ENCODE measurements at regions of chr3 and their contacts with region 1.

Region 1: GRCh38 chr3:49906004-49906743 is 2.5 kb upstream of the MST1R start:
- DNase-seq: peak; percentile 73 to 78
- H3K4me3 ChIP-seq: peak overlapping the region; percentile 43; the same call in 1 of the 2 replicates
- H3K27ac ChIP-seq: peak overlapping the region; percentile 50
- H3K4me1 ChIP-seq: peaks cover 38% of the 10 kb centered on the region
- H3K27me3 ChIP-seq: no peaks in the 10 kb centered on the region
- CTCF ChIP-seq: peak; percentile 70

Region 2: DNA sequence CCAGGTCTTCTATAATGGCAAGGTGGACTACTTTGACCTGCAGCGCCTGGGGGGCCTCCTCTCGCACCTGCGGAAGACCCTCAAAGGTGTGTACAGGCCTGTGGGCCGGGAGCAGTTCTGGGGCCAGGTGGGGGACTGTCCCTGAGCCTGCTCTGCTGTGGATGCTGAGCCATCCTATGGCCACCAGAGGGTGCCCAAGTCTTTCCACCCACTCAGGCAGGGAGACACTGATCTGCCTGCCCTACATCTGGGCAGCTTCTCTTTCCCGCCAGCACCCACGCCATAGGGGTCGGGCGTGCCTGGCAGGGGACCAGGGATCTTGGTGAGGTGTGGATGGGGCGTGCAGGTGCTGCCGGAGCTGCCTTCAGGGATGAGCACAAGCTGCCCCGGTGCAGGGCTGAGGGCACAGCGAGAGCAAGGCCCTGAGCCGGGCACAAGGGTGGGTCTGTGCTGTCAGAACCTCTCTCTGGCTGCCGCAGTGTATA is 202.7 kb before region 1 on chr3:
- CTCF ChIA-PET with region 1: no interaction called
- POLR2A ChIA-PET with region 1: no interaction called
- intact Hi-C with region 1: loop called (anchors 5 kb)
- DNase-seq: peak in 1 of 2 experiments; percentile 77
- H3K4me3 ChIP-seq: no peak overlapping the region
- H3K27ac ChIP-seq: no peak overlapping the region
- H3K4me1 ChIP-seq: no peaks in the 10 kb centered on the region
- H3K27me3 ChIP-seq: no peaks in the 10 kb centered on the region
- CTCF ChIP-seq: peak; percentile 75

Region 3: DNA sequence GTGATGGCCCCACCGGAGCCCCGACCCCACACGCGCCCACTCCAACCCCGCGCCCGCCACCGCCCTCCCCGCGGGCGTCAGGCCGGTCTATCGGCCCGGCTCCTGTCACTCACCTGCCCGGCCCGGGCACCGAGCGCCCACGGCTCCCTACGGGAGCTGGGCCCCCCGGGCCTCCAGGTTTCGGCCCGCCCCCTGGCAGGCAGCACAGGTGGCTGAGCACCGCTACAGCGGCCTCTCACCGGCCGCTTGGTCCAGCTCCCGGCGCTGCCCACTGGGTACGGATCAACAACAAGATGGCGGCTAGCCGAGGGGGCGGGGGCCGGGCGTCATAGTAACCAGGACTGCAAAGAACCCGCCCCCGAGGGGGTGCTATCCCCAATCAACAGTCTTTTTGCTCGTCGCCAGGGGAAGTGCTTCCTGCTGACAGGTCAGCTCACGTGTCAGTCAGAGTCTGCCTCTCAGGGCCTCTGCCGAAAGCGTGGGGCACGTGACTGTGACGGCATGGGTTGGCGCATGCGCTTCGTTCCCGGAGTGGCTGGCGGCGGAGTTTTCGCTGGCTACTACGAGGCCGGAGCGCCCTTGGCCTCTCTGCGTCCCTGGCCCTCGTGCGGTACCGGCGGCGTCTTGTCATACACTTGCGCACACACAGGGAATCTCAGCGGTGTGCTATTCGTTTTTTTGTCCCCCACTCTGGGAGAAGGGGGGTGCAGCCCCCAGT is 119.8 kb before region 1 on chr3 and contains the start of gene IP6K1:
- CTCF ChIA-PET with region 1: no interaction called
- POLR2A ChIA-PET with region 1: no interaction called
- intact Hi-C with region 1: loop called (anchors 5 kb)
- DNase-seq: peak; percentile 99
- H3K4me3 ChIP-seq: peak within 1 kb of the TSS; percentile 98
- H3K27ac ChIP-seq: peak within 1 kb of the TSS; percentile 63
- H3K4me1 ChIP-seq: peaks cover 13% of the 10 kb centered on the region; the same call in 1 of the 2 replicates
- H3K27me3 ChIP-seq: no peaks in the 10 kb centered on the region
- CTCF ChIP-seq: no peak
- total RNA-seq, gene IP6K1: 32.9 and 37.0 TPM in 2 replicates

Region 4: GRCh38 chr3:49839193-49839809 is 66.9 kb before region 1 on chr3:
- CTCF ChIA-PET with region 1: interaction called, 4 read pairs
- POLR2A ChIA-PET with region 1: no interaction called
- intact Hi-C with region 1: loop called (anchors 1 kb)
- DNase-seq: peak in 1 of 2 experiments; percentile 59
- H3K4me3 ChIP-seq: no peak overlapping the region
- H3K27ac ChIP-seq: no peak overlapping the region
- H3K4me1 ChIP-seq: no peaks in the 10 kb centered on the region
- H3K27me3 ChIP-seq: no peaks in the 10 kb centered on the region
- CTCF ChIP-seq: peak; percentile 80

Region 5: DNA sequence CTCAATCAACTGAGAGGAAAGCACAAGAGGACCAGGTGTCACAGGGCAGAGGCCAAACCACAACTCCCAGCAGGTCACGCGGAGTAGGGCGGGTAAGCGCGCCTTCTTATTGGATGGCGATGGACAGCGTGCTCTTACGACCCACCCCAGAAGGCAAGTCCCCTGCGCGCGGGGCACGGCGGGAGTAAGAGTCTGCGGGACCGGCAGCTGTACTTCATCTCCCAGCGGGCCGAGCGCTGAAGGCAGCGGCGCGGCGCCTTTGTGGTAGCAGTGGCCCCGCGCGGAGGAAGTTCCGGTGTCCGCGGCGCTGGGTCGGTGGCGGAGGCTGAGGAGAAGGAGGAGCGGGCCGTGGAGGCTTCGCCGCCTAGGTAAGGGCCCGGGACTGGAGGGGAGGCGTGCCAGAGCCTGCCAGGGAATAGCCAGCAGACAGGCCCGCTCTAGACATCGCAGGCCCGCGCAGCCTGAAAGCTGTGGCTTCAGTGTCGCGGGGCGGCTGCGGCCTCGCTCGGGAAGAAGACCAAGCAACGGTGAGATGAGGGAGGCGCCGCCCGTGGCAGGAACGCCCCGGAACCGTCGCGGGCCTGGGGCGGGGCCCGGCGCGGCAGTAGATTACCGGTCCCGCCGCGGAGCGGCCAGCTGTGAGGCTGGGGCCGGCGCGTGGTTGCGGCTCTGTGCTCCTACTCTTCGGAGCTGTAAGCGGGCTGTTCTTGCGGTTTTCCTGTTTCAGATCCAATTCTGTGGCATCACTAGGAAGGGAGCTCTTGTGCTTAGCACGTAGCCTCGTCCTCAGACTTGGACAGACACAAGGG is 33.9 kb after region 1 on chr3 and contains the start of gene RBM6:
- CTCF ChIA-PET with region 1: interaction called, 7 read pairs
- POLR2A ChIA-PET with region 1: no interaction called
- intact Hi-C with region 1: loop called (anchors 1 kb)
- DNase-seq: peak; percentile 93 to 95
- H3K4me3 ChIP-seq: peak within 1 kb of the TSS; percentile 99
- H3K27ac ChIP-seq: peak within 1 kb of the TSS; percentile 72
- H3K4me1 ChIP-seq: peaks cover 8% of the 10 kb centered on the region; the same call in 1 of the 2 replicates
- H3K27me3 ChIP-seq: no peaks in the 10 kb centered on the region
- CTCF ChIP-seq: no peak
- total RNA-seq, gene RBM6: 70.2 and 72.0 TPM in 2 replicates

Region 6: DNA sequence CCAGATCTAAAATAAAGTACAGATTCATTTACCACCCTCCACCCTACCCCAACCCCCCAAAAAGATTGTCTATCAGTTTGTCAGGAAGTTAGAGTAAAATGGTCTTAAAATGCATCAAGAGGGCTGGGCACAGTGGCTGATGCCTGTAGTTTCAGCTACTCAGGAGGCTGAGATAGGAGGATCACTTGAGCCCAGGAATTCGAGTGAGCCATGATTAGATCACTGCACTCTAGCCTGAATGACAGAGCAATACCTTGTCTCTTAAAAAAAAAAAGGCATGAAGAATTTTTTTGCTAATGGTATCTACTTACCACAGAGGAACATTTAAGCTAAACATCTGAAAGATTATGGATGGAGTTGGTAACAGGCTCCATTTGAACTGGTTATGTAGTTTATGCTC is 104.8 kb after region 1 on chr3:
- CTCF ChIA-PET with region 1: no interaction called
- POLR2A ChIA-PET with region 1: no interaction called
- intact Hi-C with region 1: no loop called
- DNase-seq: no peak
- H3K4me3 ChIP-seq: no peak overlapping the region
- H3K27ac ChIP-seq: no peak overlapping the region
- H3K4me1 ChIP-seq: no peaks in the 10 kb centered on the region
- H3K27me3 ChIP-seq: no peaks in the 10 kb centered on the region
- CTCF ChIP-seq: no peak